ENCODE measurements at regions of chr5 and their contacts with region 1.

Region 1: DNA sequence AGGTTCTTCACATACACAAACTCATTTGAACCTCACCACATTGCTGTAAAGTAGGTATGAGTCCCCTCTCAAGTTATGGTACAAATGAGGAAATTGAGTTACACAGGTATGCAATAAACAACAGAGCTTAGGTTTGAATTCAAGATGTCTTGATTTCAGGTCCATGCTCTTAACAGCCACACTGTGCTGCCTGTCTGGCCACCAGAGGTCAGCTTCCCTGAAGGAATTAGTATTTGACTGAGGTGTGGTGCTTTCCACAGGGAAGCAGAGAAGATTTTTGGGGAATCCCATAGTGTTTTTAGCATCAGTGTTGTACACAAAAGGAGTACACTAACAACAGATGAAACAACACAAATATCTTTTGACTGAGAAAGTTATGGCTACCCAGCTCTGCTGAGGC is 94.4 kb upstream of the ITGA1 start:
- DNase-seq: peak; percentile 50
- ATAC-seq: no peak
- H3K4me3 Mint-ChIP-seq: no peak overlapping the region
- H3K27ac Mint-ChIP-seq: no peak overlapping the region
- H3K4me1 Mint-ChIP-seq: peaks cover 7% of the 10 kb centered on the region
- H3K27me3 Mint-ChIP-seq: no peaks in the 10 kb centered on the region
- CTCF ChIP-seq: peak; percentile 36

Region 2: GRCh38 chr5:52725065-52725746 is 31.9 kb after region 1 on chr5:
- CTCF ChIA-PET with region 1: interaction called, 12 read pairs
- POLR2A ChIA-PET with region 1: no interaction called
- intact Hi-C with region 1: no loop called
- DNase-seq: peak; percentile 76
- ATAC-seq: peak; percentile 99
- H3K4me3 Mint-ChIP-seq: no peak overlapping the region
- H3K27ac Mint-ChIP-seq: peak overlapping the region; percentile 81
- H3K4me1 Mint-ChIP-seq: peaks cover 48% of the 10 kb centered on the region
- H3K27me3 Mint-ChIP-seq: no peaks in the 10 kb centered on the region
- CTCF ChIP-seq: no peak

Region 3: GRCh38 chr5:52915176-52915875 is 222.0 kb after region 1 on chr5:
- CTCF ChIA-PET with region 1: interaction called, 20 read pairs
- POLR2A ChIA-PET with region 1: no interaction called
- intact Hi-C with region 1: no loop called
- DNase-seq: peak; percentile 62
- ATAC-seq: peak; percentile 98
- H3K4me3 Mint-ChIP-seq: peak overlapping the region; percentile 55
- H3K27ac Mint-ChIP-seq: no peak overlapping the region
- H3K4me1 Mint-ChIP-seq: peaks cover 7% of the 10 kb centered on the region
- H3K27me3 Mint-ChIP-seq: no peaks in the 10 kb centered on the region
- CTCF ChIP-seq: peak; percentile 88